ENCODE measurements at regions of chr17 and their contacts with region 1.

Region 1: GRCh38 chr17:76147211-76148014 is 6.4 kb upstream of the FOXJ1 start:
- DNase-seq: peak in 1 of 2 experiments; percentile 64
- ATAC-seq: peak in 1 of 2 experiments; percentile 61; a peak in 3 of 6 replicates
- H3K4me3 ChIP-seq: no peak overlapping the region
- H3K27ac ChIP-seq: no peak overlapping the region
- H3K4me1 ChIP-seq: no peaks in the 10 kb centered on the region
- CTCF ChIP-seq: peak; percentile 64
- EP300 ChIP-seq: no peak
- POLR2A ChIP-seq: no peak
- RAD21 ChIP-seq: peak; percentile 55 to 59

Region 2: GRCh38 chr17:76036497-76037261 is 110.7 kb before region 1 on chr17:
- CTCF ChIA-PET with region 1: no interaction called
- POLR2A ChIA-PET with region 1: no interaction called
- DNase-seq: no peak
- ATAC-seq: no peak
- H3K4me3 ChIP-seq: no peak overlapping the region
- H3K27ac ChIP-seq: no peak overlapping the region
- H3K4me1 ChIP-seq: no peaks in the 10 kb centered on the region
- CTCF ChIP-seq: no peak
- EP300 ChIP-seq: no peak
- POLR2A ChIP-seq: peak; percentile 8; the same call in 1 of the 2 replicates
- RAD21 ChIP-seq: no peak

Region 3: GRCh38 chr17:76102944-76103273 is 44.5 kb before region 1 on chr17:
- CTCF ChIA-PET with region 1: no interaction called
- POLR2A ChIA-PET with region 1: no interaction called
- DNase-seq: no peak
- ATAC-seq: peak; percentile 14 to 17; a peak in 3 of 6 replicates
- H3K4me3 ChIP-seq: peak overlapping the region; percentile 69
- H3K27ac ChIP-seq: peak overlapping the region; percentile 84 to 87
- H3K4me1 ChIP-seq: peaks cover 11% of the 10 kb centered on the region
- CTCF ChIP-seq: no peak
- EP300 ChIP-seq: no peak
- POLR2A ChIP-seq: no peak
- RAD21 ChIP-seq: no peak

Region 4: DNA sequence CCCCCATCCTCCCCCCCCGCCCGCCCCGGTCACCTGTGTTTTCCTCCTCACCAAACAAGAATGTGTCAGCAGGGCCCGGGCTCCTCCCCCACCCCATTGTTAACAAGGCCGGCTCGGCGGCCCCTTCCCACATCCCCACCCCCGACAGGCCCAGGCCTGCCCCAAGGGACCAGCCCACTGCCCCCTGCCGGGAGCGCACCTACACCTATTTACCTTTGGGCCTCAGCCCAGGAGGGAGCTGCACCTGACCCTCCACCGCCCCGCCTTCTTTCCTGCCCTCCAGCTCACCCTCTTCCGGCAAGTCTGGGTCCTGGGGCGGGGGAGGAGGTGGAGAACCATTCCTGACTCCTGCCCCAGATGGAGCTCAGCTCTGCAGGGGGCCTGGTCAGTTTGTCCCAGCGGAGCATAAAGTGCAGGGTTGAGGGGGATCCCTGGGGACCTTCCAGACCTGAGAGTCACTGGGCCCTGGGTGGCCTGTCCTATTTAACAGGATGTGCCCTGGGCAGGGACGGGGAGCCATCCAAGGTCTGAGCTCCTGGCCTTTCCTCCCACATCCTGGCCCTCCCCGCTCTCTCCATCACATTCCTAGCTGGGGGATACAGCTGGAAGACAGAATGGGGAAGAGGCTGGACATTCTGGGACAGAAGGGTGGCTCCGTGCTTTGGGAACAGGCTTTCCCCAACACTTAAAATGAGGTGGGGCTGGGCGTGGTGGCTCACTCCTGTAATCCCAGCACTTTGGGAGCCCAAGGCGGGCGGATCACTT is 14.7 kb before region 1 on chr17:
- CTCF ChIA-PET with region 1: interaction called, 206 read pairs
- POLR2A ChIA-PET with region 1: no interaction called
- DNase-seq: no peak
- ATAC-seq: no peak
- H3K4me3 ChIP-seq: no peak overlapping the region
- H3K27ac ChIP-seq: peak overlapping the region; percentile 35 to 69; a peak in 5 of 6 replicates
- H3K4me1 ChIP-seq: peaks cover 28% of the 10 kb centered on the region
- CTCF ChIP-seq: no peak
- EP300 ChIP-seq: no peak
- POLR2A ChIP-seq: no peak
- RAD21 ChIP-seq: no peak